ENCODE measurements at regions of chr16 and their contacts with region 1.

Region 1: DNA sequence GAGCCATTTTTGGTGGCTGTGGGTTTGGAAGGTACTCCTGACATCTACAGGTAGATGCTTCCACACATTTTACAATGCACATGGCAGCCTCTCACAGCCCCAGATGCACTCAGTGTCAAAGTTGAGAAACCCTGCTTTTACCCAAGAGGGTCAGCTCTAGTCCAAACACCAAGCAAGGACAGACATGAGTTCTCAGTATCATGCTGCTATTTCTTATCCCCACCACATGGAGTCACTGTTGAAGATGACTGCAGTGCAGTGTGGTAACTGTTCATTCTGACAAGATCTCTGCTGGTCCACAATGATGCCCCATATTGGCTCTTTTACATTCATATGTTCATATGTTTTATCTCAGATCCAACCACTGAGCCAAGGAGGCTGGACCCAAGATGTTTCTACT is 50.5 kb upstream of the SALL1 start:
- DNase-seq: no peak

Region 2: DNA sequence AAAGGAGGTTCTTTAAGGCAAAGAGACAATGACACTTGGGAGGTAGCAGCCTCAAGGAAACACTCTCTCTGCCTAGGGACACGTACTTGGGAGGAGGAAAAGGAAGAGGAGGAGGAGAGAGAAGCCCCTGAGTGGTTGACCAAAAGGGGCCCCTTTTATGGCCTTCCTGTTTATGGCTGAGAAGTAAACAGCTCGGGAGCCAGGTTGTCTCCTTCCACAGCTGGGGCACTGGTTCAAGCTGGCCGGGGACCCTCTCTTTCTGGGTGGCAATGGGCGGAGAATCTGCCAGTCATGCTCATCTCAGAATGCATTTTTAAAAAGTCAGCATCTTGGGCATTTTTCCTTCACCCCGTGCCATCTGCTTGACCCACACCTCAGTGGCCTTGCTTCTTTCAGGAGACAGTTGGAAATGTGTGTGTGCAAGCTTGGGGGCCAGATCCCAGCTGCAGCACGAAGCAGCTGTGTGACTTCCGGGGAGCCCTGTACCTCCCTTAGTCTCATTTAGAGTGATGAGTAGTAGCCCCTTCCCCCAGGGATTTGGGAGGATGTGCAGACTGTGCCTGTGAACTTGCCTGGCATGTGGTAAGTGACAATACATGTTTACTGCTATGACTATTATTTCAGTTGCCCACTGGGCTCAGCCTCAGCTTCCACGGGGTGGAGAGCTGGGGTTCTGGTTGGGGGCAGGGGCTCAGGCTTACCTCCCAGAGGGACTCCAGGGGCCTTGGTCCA is 16.7 kb before region 1 on chr16:
- intact Hi-C with region 1: loop called in 1 of 2 experiments (anchors 1 kb)
- DNase-seq: no peak

Region 3: GRCh38 chr16:51538707-51539498 is 337.3 kb after region 1 on chr16:
- intact Hi-C with region 1: no loop called
- DNase-seq: no peak

Region 4: GRCh38 chr16:51797669-51798259 is 596.2 kb after region 1 on chr16:
- intact Hi-C with region 1: loop called in 1 of 2 experiments (anchors 5 kb)
- DNase-seq: no peak

Measured in posterior vena cava (tissue), 2 donors.